ENCODE measurements at regions of chr3 and their contacts with region 1.

Region 1: GRCh38 chr3:8769088-8769822 is at the start of gene OXTR:
- DNase-seq: peak; percentile 89
- CTCF ChIP-seq: peak; percentile 100

Region 2: GRCh38 chr3:8663177-8664061 is 105.8 kb before region 1 on chr3:
- CTCF ChIA-PET with region 1: interaction called, 14 read pairs
- POLR2A ChIA-PET with region 1: no interaction called
- DNase-seq: peak; percentile 66
- CTCF ChIP-seq: peak; percentile 52

Region 3: GRCh38 chr3:8741581-8742261 is 27.5 kb before region 1 on chr3:
- CTCF ChIA-PET with region 1: interaction called, 12 read pairs
- POLR2A ChIA-PET with region 1: no interaction called
- DNase-seq: no peak
- CTCF ChIP-seq: no peak

Region 4: DNA sequence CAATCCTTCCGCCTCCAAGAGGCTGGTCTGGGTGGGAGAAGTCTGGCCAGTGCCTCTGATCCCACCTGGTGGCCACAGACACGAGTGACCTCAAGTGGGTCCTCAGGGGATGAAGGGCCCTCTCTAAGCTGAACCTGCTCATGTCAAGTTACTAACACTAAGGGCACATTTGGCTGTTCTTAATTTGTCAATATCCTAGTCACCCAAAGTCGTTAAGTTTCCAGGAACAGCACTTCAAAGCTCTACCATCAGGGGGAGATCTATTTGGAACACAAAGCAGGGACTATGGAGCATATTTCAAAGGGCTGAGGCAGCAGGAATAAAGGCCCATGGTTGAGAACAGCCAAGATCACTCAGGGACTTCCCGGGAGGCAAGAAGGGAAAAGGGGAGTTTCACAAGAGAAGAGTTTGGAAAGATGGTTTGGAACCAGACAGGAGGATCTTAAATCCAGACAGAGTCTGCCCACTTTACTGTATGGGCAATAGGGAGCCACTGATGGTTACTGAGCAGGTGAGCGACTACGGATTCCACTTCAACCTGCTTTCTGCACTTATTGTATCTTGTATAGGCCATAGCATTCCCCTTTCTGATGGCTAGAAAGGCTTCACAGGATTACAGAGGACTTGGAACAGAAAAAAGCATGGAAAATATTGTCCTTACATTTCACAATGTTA is 13.6 kb before region 1 on chr3:
- CTCF ChIA-PET with region 1: interaction called, 33 read pairs
- POLR2A ChIA-PET with region 1: no interaction called
- DNase-seq: no peak
- CTCF ChIP-seq: no peak

Region 5: GRCh38 chr3:8784676-8785435 is 15.6 kb after region 1 on chr3:
- CTCF ChIA-PET with region 1: interaction called, 49 read pairs
- POLR2A ChIA-PET with region 1: no interaction called
- DNase-seq: no peak
- CTCF ChIP-seq: no peak

Region 6: DNA sequence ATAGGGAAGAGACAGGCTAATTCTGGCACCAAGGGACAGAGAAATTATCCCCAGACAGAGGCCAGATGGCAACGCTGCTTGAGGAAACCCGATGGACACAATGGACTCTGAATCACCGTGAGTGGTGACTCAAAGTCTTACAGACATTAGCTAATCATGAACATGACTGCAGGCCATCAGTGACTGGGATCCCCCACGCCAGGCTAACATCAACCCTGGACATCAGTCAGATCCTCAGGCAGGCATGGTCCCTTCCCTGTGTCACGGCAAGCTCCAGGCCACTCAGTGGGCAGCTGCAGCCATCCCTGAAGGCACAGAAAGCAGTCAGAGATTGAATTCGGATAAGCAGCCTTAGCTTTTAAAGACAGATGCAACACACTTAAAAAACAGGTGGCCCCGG is 24.0 kb after region 1 on chr3:
- CTCF ChIA-PET with region 1: interaction called, 18 read pairs
- POLR2A ChIA-PET with region 1: no interaction called
- DNase-seq: no peak
- CTCF ChIP-seq: no peak